Activated naive CD4-positive, alpha-beta T cell treated with anti-CD3 and anti-CD28 coated beads for 36 hours (primary cell): ENCODE measurements at regions of chr2 and their contacts with region 1.

Region 1: DNA sequence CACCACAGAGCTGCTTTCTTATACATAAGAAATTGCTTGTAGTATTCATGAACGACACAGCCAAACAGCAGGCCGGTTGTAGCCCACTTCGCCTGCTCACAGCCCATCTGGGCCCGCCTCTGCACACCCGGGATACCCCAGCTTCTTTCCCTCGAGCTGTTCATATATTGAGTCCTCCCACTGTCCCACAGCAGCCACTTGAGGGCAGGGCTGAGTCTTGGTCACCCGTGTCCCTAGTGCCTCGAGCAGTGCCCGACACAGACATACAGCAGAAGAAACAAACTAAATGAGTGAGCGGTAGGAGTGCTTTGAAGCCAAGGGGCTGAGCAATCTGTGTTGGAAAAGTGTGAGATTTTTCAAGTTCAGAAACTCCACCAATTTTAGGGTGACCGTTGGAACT is 251.4 kb downstream of the KLHL29 start:
- DNase-seq: no peak
- H3K4me3 Mint-ChIP-seq: no peak overlapping the region
- H3K27ac Mint-ChIP-seq: no peak overlapping the region
- H3K4me1 Mint-ChIP-seq: peaks cover 4% of the 10 kb centered on the region
- H3K27me3 Mint-ChIP-seq: no peaks in the 10 kb centered on the region

Region 2: GRCh38 chr2:22991844-22992243 is 644.6 kb before region 1 on chr2:
- CTCF ChIA-PET with region 1: no interaction called
- intact Hi-C with region 1: no loop called
- DNase-seq: no peak
- H3K4me3 Mint-ChIP-seq: no peak overlapping the region
- H3K27ac Mint-ChIP-seq: no peak overlapping the region
- H3K4me1 Mint-ChIP-seq: no peaks in the 10 kb centered on the region
- H3K27me3 Mint-ChIP-seq: no peaks in the 10 kb centered on the region

Region 3: GRCh38 chr2:23169896-23170295 is 466.5 kb before region 1 on chr2:
- CTCF ChIA-PET with region 1: no interaction called
- intact Hi-C with region 1: no loop called
- DNase-seq: no peak
- H3K4me3 Mint-ChIP-seq: no peak overlapping the region
- H3K27ac Mint-ChIP-seq: no peak overlapping the region
- H3K4me1 Mint-ChIP-seq: no peaks in the 10 kb centered on the region
- H3K27me3 Mint-ChIP-seq: peaks cover 23% of the 10 kb centered on the region

Region 4: GRCh38 chr2:23624378-23624777 is 12.0 kb before region 1 on chr2:
- CTCF ChIA-PET with region 1: interaction called, 10 read pairs
- intact Hi-C with region 1: no loop called
- DNase-seq: peak; percentile 45
- H3K4me3 Mint-ChIP-seq: no peak overlapping the region
- H3K27ac Mint-ChIP-seq: no peak overlapping the region
- H3K4me1 Mint-ChIP-seq: no peaks in the 10 kb centered on the region
- H3K27me3 Mint-ChIP-seq: no peaks in the 10 kb centered on the region

Region 5: DNA sequence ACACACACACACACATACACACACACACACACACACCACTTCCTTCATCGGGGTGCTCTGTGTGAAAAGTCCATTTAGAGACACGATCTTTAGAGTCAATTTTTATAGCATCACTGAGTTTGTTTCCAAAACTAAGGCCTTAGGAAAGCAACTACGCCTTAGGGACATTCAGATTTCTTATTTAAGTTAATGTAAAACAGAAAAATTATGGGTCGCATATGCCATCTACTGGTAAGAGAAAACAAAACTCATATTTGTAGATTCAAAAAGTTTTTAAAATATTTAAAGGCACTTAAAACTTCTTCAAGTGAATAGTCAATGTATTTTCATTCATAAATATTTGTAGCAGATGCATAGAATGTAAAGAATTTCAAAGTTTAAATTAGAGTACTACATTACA is 124.3 kb after region 1 on chr2:
- CTCF ChIA-PET with region 1: no interaction called
- intact Hi-C with region 1: loop called (anchors 5 kb)
- DNase-seq: no peak
- H3K4me3 Mint-ChIP-seq: no peak overlapping the region
- H3K27ac Mint-ChIP-seq: no peak overlapping the region
- H3K4me1 Mint-ChIP-seq: peaks cover 11% of the 10 kb centered on the region
- H3K27me3 Mint-ChIP-seq: no peaks in the 10 kb centered on the region